Dorsolateral prefrontal cortex (tissue), 120 donors: ENCODE measurements at regions of chr12 and their contacts with region 1.

Region 1: GRCh38 chr12:91326058-91327027 is 143.7 kb upstream of the DCN start:
- DNase-seq: peak in 2 of 10 donors; percentile 18 to 39
- H3K4me3 ChIP-seq: no peak overlapping the region
- H3K27ac ChIP-seq: peak overlapping the region in 13 of 59 donors; percentile 16 to 61 (median 37)
- H3K27me3 ChIP-seq: no peaks in the 10 kb centered on the region
- CTCF ChIP-seq: peak; percentile 70 to 91 (median 82)

Region 2: GRCh38 chr12:91178139-91178561 is 148.2 kb before region 1 on chr12:
- intact Hi-C with region 1: loop called in 1 of 2 experiments (anchors 10 kb)
- DNase-seq: no peak
- H3K4me3 ChIP-seq: peak overlapping the region in 41 of 59 donors; percentile 1 to 56 (median 30)
- H3K27ac ChIP-seq: peak overlapping the region in 36 of 59 donors; percentile 7 to 79 (median 40)
- H3K27me3 ChIP-seq: no peaks in the 10 kb centered on the region
- CTCF ChIP-seq: peak in 55 of 56 donors; percentile 15 to 72 (median 51)